ENCODE measurements at regions of chr2 and their contacts with region 1.

Region 1: DNA sequence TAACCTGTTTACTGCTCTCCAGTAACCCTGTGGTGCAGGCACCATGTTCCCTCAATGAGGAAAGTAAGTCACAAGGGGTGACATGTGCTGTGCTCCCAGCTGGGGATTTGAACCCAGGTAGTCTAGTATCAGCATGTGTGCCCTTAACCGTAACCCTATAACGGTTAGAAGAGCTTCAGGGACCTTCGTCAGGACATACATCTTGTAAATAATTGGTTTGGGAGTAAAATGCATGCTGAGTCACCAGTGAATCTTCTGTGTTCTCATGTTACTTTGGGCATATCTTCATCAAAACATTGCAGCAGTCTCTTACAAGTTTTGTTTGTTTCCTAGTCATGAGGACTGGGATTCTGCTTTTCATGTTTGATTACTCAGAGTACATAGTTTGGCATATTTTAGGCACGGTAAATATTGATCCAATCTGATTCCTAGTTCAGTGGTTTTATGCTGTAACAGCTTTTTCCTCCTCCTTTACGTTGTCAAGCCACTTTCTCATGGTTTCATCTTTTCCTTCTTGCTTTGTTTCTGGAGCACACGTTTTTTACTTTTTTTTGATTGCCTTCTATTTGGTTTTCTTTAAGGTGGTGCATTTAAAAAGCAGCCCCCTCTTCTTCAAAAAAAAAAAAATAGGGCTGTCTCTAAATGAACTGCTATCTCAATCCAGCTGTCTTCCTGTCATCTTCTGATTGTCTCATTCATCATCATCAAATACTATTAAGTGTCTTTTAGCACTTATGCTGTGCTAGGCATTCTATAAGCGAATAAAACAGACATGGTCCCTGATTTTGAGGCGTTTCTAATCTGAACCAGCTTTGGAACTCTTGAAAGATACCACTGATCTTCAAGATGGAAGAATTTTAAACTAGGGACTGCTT is 50.4 kb downstream of the CLIP4 start:
- DNase-seq: no peak
- H3K4me3 Mint-ChIP-seq: no peak overlapping the region
- H3K27ac Mint-ChIP-seq: peak overlapping the region; percentile 30
- H3K4me1 Mint-ChIP-seq: peaks cover 31% of the 10 kb centered on the region
- H3K27me3 Mint-ChIP-seq: no peaks in the 10 kb centered on the region
- CTCF ChIP-seq: no peak

Region 2: GRCh38 chr2:28976584-28976983 is 189.0 kb before region 1 on chr2:
- CTCF ChIA-PET with region 1: no interaction called
- intact Hi-C with region 1: no loop called
- DNase-seq: peak; percentile 90
- H3K4me3 Mint-ChIP-seq: peak overlapping the region; percentile 44
- H3K27ac Mint-ChIP-seq: peak overlapping the region; percentile 88
- H3K4me1 Mint-ChIP-seq: peaks cover 36% of the 10 kb centered on the region
- H3K27me3 Mint-ChIP-seq: no peaks in the 10 kb centered on the region
- CTCF ChIP-seq: no peak

Region 3: GRCh38 chr2:29130295-29130694 is 35.3 kb before region 1 on chr2:
- CTCF ChIA-PET with region 1: no interaction called
- intact Hi-C with region 1: loop called (anchors 5 kb)
- DNase-seq: peak; percentile 46
- H3K4me3 Mint-ChIP-seq: peak overlapping the region; percentile 53
- H3K27ac Mint-ChIP-seq: peak overlapping the region; percentile 89
- H3K4me1 Mint-ChIP-seq: peaks cover 41% of the 10 kb centered on the region
- H3K27me3 Mint-ChIP-seq: no peaks in the 10 kb centered on the region
- CTCF ChIP-seq: no peak